ENCODE measurements at regions of chr3 and their contacts with region 1.

Region 1: GRCh38 chr3:177197041-177197727 is at the start of gene TBL1XR1:
- DNase-seq: peak; percentile 82 to 94 (median 90)
- H3K4me3 ChIP-seq: peak within 1 kb of the TSS; percentile 92
- H3K4me3 Mint-ChIP-seq: peak within 1 kb of the TSS; percentile 92 to 99 (median 98)
- H3K27ac ChIP-seq: peak within 1 kb of the TSS; percentile 80
- H3K27ac Mint-ChIP-seq: peak within 1 kb of the TSS; percentile 90 to 99 (median 98)
- H3K4me1 ChIP-seq: peaks cover 60% of the 10 kb centered on the region
- H3K4me1 Mint-ChIP-seq: peaks cover 60 to 73% (median 70%) of the 10 kb centered on the region in 3 donors
- H3K27me3 ChIP-seq: no peaks in the 10 kb centered on the region
- H3K27me3 Mint-ChIP-seq: peaks cover 0 to 7% of the 10 kb centered on the region in 2 donors
- total RNA-seq, gene TBL1XR1: 173 to 193 TPM

Region 2: GRCh38 chr3:177050501-177051237 is 146.5 kb before region 1 on chr3:
- CTCF ChIA-PET with region 1: interaction called, 16 read pairs
- POLR2A ChIA-PET with region 1: interaction called, 15 read pairs
- DNase-seq: peak in 2 of 5 donors; percentile 41 to 51
- H3K4me3 ChIP-seq: no peak overlapping the region
- H3K4me3 Mint-ChIP-seq: no peak overlapping the region
- H3K27ac ChIP-seq: no peak overlapping the region
- H3K27ac Mint-ChIP-seq: peak overlapping the region in 2 of 8 donors; percentile 46 to 63
- H3K4me1 ChIP-seq: peaks cover 10% of the 10 kb centered on the region
- H3K4me1 Mint-ChIP-seq: peaks cover 12 to 27% (median 18%) of the 10 kb centered on the region in 3 donors
- H3K27me3 ChIP-seq: no peaks in the 10 kb centered on the region
- H3K27me3 Mint-ChIP-seq: no peaks in the 10 kb centered on the region

Region 3: GRCh38 chr3:177409451-177409850 is 212.3 kb after region 1 on chr3:
- CTCF ChIA-PET with region 1: no interaction called
- POLR2A ChIA-PET with region 1: no interaction called
- DNase-seq: no peak
- H3K4me3 ChIP-seq: no peak overlapping the region
- H3K4me3 Mint-ChIP-seq: no peak overlapping the region
- H3K27ac ChIP-seq: no peak overlapping the region
- H3K27ac Mint-ChIP-seq: peak overlapping the region in 1 of 8 donors; percentile 16
- H3K4me1 ChIP-seq: peaks cover 10% of the 10 kb centered on the region
- H3K4me1 Mint-ChIP-seq: peaks cover 9 to 16% (median 11%) of the 10 kb centered on the region in 3 donors
- H3K27me3 ChIP-seq: no peaks in the 10 kb centered on the region
- H3K27me3 Mint-ChIP-seq: no peaks in the 10 kb centered on the region

Region 4: GRCh38 chr3:177419904-177420601 is 222.9 kb after region 1 on chr3:
- CTCF ChIA-PET with region 1: no interaction called
- POLR2A ChIA-PET with region 1: no interaction called
- DNase-seq: no peak
- H3K4me3 ChIP-seq: no peak overlapping the region
- H3K4me3 Mint-ChIP-seq: no peak overlapping the region
- H3K27ac ChIP-seq: no peak overlapping the region
- H3K27ac Mint-ChIP-seq: peak overlapping the region in 1 of 8 donors; percentile 45
- H3K4me1 ChIP-seq: no peaks in the 10 kb centered on the region
- H3K4me1 Mint-ChIP-seq: peaks cover 5 to 26% (median 24%) of the 10 kb centered on the region in 3 donors
- H3K27me3 ChIP-seq: no peaks in the 10 kb centered on the region
- H3K27me3 Mint-ChIP-seq: no peaks in the 10 kb centered on the region

Region 5: GRCh38 chr3:177597311-177598096 is 400.3 kb after region 1 on chr3:
- CTCF ChIA-PET with region 1: no interaction called
- POLR2A ChIA-PET with region 1: interaction called, 13 read pairs
- DNase-seq: peak in 4 of 5 donors; percentile 16 to 62 (median 51)
- H3K4me3 ChIP-seq: peak overlapping the region; percentile 7
- H3K4me3 Mint-ChIP-seq: peak overlapping the region; percentile 4 to 78 (median 72)
- H3K27ac ChIP-seq: peak overlapping the region; percentile 33
- H3K27ac Mint-ChIP-seq: peak overlapping the region; percentile 75 to 97 (median 94)
- H3K4me1 ChIP-seq: peaks cover 59% of the 10 kb centered on the region
- H3K4me1 Mint-ChIP-seq: peaks cover 81 to 91% (median 88%) of the 10 kb centered on the region in 3 donors
- H3K27me3 ChIP-seq: no peaks in the 10 kb centered on the region
- H3K27me3 Mint-ChIP-seq: no peaks in the 10 kb centered on the region

Region 6: GRCh38 chr3:177640319-177640997 is 443.3 kb after region 1 on chr3:
- CTCF ChIA-PET with region 1: interaction called, 4 read pairs
- POLR2A ChIA-PET with region 1: interaction called, 11 read pairs
- DNase-seq: no peak
- H3K4me3 ChIP-seq: no peak overlapping the region
- H3K4me3 Mint-ChIP-seq: peak overlapping the region in 5 of 7 donors; percentile 12 to 52 (median 29)
- H3K27ac ChIP-seq: no peak overlapping the region
- H3K27ac Mint-ChIP-seq: peak overlapping the region; percentile 55 to 98 (median 85)
- H3K4me1 ChIP-seq: peaks cover 48% of the 10 kb centered on the region
- H3K4me1 Mint-ChIP-seq: peaks cover 57 to 60% (median 60%) of the 10 kb centered on the region in 3 donors
- H3K27me3 ChIP-seq: no peaks in the 10 kb centered on the region
- H3K27me3 Mint-ChIP-seq: peaks cover 0 to 2% of the 10 kb centered on the region in 2 donors

Measured in CD8-positive, alpha-beta memory T cell (primary cell).